ENCODE measurements at regions of chr12 and their contacts with region 1.

Region 1: DNA sequence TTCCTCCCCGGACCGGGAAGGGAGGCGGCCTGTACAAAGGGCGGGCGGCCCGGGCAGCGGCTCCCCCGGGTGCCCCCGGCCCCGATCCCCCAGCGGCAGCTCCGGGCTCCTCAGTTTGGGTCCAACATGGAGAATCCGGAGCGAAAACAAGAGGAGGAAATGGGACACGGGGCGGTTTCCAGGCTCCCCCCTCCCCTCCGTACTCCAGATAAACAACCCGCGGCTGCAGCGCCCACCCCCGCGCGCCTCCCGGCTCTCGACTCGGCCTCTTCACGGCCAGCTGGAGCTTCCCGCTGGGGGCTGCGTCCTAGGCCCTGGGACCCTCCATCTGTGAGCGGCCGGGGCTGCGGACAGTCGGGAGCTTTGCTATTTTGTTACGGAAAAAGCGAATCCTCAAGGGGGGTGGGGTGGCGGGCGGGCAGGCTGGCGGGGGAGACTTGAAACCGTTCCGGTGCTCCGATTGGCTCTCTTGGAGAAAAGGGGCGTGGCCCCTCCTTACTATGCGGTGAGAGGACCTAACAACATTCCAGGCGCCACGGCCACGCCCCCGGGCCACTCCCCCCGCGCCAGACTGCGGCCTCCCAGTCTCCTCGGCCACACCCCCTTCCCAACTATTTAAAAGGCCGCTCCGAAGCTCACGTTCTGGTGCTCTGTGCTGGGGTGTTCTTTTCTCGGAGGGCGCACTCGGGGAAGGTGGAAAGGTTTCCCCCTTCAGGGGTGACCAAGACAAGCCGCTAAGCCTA is at the start of gene CTDSP2:
- DNase-seq: peak; percentile 99
- H3K4me3 ChIP-seq: peak within 1 kb of the TSS; percentile 88 to 99
- H3K27ac ChIP-seq: peak within 1 kb of the TSS; percentile 94 to 99
- H3K4me1 ChIP-seq: peaks cover 24 to 29% of the 10 kb centered on the region in 2 experiments; a peak in 3 of 4 replicates
- H3K27me3 ChIP-seq: no peaks in the 10 kb centered on the region
- CTCF ChIP-seq: no peak
- EP300 ChIP-seq: no peak
- RAD21 ChIP-seq: no peak
- polyA plus RNA-seq, gene CTDSP2: 117 and 119 TPM in 2 replicates

Region 2: DNA sequence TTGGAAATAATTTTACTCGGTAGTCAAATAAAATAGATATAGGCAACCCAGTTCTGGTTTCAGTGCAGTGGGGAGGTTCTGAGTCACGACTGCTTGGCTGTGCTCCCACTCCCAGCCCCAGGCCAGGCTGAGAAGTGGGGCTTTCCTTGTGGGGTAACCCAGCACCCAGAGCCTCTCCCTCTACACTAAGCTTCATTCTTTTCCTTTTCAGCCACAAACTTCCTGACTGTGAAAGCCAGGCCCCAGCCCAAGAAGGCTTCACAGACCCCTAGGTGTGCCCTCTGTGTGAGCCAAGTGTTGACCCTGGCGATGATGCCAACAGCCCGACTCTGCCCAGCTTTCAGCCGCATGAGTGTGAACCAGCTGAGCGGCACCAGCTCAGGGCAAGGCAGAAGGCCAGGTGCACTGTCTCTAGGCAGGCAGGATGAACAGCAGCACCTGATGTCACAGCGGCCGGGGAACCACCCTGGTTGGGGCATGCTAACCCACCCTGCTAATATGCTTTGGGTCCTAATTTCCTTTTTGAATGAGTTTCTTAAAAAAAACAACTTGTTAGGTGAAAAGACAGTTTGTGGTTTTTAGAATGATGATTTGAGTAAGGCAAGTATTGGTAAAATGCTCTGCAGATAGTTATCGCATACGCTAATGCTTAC is 52.4 kb after region 1 on chr12:
- CTCF ChIA-PET with region 1: interaction called, 67 read pairs
- POLR2A ChIA-PET with region 1: interaction called, 52 read pairs
- DNase-seq: no peak
- H3K4me3 ChIP-seq: no peak overlapping the region; a peak in 1 of 4 replicates
- H3K27ac ChIP-seq: peak overlapping the region; percentile 48 to 79
- H3K4me1 ChIP-seq: peaks cover 52% of the 10 kb centered on the region in 2 experiments
- H3K27me3 ChIP-seq: no peaks in the 10 kb centered on the region
- CTCF ChIP-seq: no peak
- EP300 ChIP-seq: no peak
- RAD21 ChIP-seq: no peak

Measured in SK-N-SH (cell line).